ENCODE measurements at regions of chrX and their contacts with region 1.

Region 1: DNA sequence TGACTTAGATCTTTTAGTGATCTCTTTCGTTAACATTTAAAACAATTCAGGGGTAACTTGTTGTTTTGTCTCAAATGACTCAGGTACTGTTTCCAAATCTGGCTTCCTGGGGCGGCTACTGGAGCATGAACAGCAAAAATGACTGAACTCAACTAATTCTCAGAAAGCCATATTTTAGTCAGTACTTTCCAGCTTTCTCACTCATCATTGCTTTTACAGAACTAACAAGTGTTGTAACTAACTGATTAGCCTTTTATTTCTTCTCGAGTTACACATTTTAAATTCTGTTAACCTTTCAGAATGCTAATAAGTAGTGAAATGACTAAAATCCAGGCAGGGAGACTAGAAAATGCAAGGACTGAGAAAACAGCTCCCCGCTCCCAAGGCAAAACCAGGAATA is 55.3 kb downstream of the JADE3 start:
- DNase-seq: peak; percentile 56
- ATAC-seq: peak; percentile 77
- H3K4me3 ChIP-seq: no peak overlapping the region
- H3K27ac ChIP-seq: 0 out of 2 replicates have a peak overlapping the region, but pooled peaks have one; percentile 31
- H3K4me1 ChIP-seq: peaks cover 17% of the 10 kb centered on the region
- H3K27me3 ChIP-seq: peaks cover 0 to 5% of the 10 kb centered on the region in 2 experiments; a peak in 1 of 4 replicates
- CTCF ChIP-seq: no peak
- EP300 ChIP-seq: peak; percentile 29 to 77; a peak in 3 of 4 replicates
- POLR2A ChIP-seq: no peak
- RAD21 ChIP-seq: no peak

Region 2: GRCh38 chrX:46554942-46555341 is 412.6 kb before region 1 on chrX:
- CTCF ChIA-PET with region 1: no interaction called
- POLR2A ChIA-PET with region 1: no interaction called
- RAD21 ChIA-PET with region 1: no interaction called
- SMC1A ChIA-PET with region 1: no interaction called
- in situ Hi-C with region 1: no loop called
- intact Hi-C with region 1: loop called (anchors 10 kb)
- DNase-seq: no peak
- ATAC-seq: peak; percentile 54
- H3K4me3 ChIP-seq: no peak overlapping the region
- H3K27ac ChIP-seq: no peak overlapping the region
- H3K4me1 ChIP-seq: no peaks in the 10 kb centered on the region
- H3K27me3 ChIP-seq: no peaks in the 10 kb centered on the region
- CTCF ChIP-seq: peak in 2 of 3 experiments; percentile 18 to 52; a peak in 2 of 6 replicates
- EP300 ChIP-seq: no peak
- POLR2A ChIP-seq: no peak
- RAD21 ChIP-seq: peak; percentile 55; the same call in 1 of the 2 replicates

Region 3: GRCh38 chrX:46903458-46904242 is 63.9 kb before region 1 on chrX:
- CTCF ChIA-PET with region 1: interaction called, 6 read pairs
- POLR2A ChIA-PET with region 1: no interaction called
- RAD21 ChIA-PET with region 1: interaction called, 8 read pairs
- SMC1A ChIA-PET with region 1: interaction called, 13 read pairs
- in situ Hi-C with region 1: no loop called
- intact Hi-C with region 1: no loop called
- DNase-seq: peak; percentile 48
- ATAC-seq: peak; percentile 100
- H3K4me3 ChIP-seq: peak overlapping the region; percentile 33; the same call in 1 of the 2 replicates
- H3K27ac ChIP-seq: no peak overlapping the region
- H3K4me1 ChIP-seq: no peaks in the 10 kb centered on the region
- H3K27me3 ChIP-seq: no peaks in the 10 kb centered on the region
- CTCF ChIP-seq: peak; percentile 60 to 67 (median 66)
- EP300 ChIP-seq: no peak
- POLR2A ChIP-seq: no peak
- RAD21 ChIP-seq: peak; percentile 65

Region 4: GRCh38 chrX:46953597-46953996 is 13.9 kb before region 1 on chrX:
- CTCF ChIA-PET with region 1: interaction called, 3 read pairs
- POLR2A ChIA-PET with region 1: interaction called, 3 read pairs
- RAD21 ChIA-PET with region 1: interaction called, 11 read pairs
- SMC1A ChIA-PET with region 1: interaction called, 23 read pairs
- in situ Hi-C with region 1: no loop called
- intact Hi-C with region 1: loop called (anchors 1 kb)
- DNase-seq: no peak
- ATAC-seq: peak; percentile 76
- H3K4me3 ChIP-seq: no peak overlapping the region
- H3K27ac ChIP-seq: peak overlapping the region; percentile 50; the same call in 1 of the 2 replicates
- H3K4me1 ChIP-seq: peaks cover 16% of the 10 kb centered on the region
- H3K27me3 ChIP-seq: no peaks in the 10 kb centered on the region; a peak in 1 of 4 replicates
- CTCF ChIP-seq: no peak
- EP300 ChIP-seq: no peak
- POLR2A ChIP-seq: no peak
- RAD21 ChIP-seq: no peak